CD8-positive, alpha-beta T cell (primary cell): ENCODE measurements at regions of chr15 and their contacts with region 1.

Region 1: DNA sequence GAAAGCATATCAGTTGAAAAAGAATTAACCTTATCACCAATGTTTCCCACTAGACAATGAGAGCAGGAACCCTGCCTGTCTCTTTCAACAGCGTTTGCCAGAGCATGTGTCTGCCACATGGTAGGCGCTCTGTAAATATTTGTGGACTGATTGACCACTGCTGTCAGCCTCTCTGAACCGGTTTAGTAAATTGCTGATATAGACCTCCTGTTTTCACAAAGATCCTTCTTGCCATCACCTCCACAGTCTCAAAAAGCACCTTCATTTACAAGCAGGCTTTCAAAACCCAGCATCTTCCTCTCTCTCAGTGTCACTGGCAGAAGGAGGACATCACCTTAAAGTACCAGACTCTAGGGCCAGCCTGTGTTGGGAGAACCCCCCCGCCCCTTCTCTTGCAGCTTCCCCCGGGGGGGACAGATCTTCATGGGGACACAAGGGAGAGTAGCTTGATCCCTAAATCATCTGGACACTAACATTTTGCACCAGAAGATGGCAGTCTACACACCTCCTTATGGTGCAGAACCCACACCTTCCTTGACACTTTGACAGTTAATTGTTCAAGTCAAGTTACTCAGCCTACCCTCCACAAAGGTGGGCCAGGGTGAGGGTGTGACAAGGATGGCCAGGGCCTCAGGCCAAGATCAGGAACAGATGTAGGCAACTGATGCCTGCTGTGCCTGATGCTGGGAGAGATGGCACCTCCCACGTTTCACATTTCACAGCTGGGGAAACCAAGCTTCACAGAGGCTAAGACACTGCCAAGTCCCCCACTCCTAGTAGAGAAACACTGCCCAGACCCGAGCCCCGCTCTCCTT is 37.8 kb upstream of the USP3 start:
- DNase-seq: peak in 7 of 9 experiments; percentile 41 to 88 (median 61)
- ATAC-seq: peak; percentile 90
- H3K4me3 ChIP-seq: no peak overlapping the region
- H3K4me3 Mint-ChIP-seq: no peak overlapping the region
- H3K27ac ChIP-seq: no peak overlapping the region
- H3K27ac Mint-ChIP-seq: peak overlapping the region; percentile 9
- H3K4me1 ChIP-seq: peaks cover 8% of the 10 kb centered on the region
- H3K4me1 Mint-ChIP-seq: peaks cover 21% of the 10 kb centered on the region
- H3K27me3 ChIP-seq: no peaks in the 10 kb centered on the region
- H3K27me3 Mint-ChIP-seq: no peaks in the 10 kb centered on the region
- CTCF ChIP-seq: peak; percentile 66

Region 2: GRCh38 chr15:63414474-63415120 is 52.0 kb before region 1 on chr15:
- CTCF ChIA-PET with region 1: no interaction called
- POLR2A ChIA-PET with region 1: no interaction called
- intact Hi-C with region 1: no loop called
- DNase-seq: peak in 4 of 9 experiments; percentile 11 to 77 (median 52)
- ATAC-seq: peak; percentile 91
- H3K4me3 ChIP-seq: no peak overlapping the region
- H3K4me3 Mint-ChIP-seq: no peak overlapping the region
- H3K27ac ChIP-seq: peak overlapping the region; percentile 12 to 37
- H3K27ac Mint-ChIP-seq: peak overlapping the region; percentile 93
- H3K4me1 ChIP-seq: peaks cover 3% of the 10 kb centered on the region
- H3K4me1 Mint-ChIP-seq: peaks cover 10% of the 10 kb centered on the region
- H3K27me3 ChIP-seq: no peaks in the 10 kb centered on the region
- H3K27me3 Mint-ChIP-seq: no peaks in the 10 kb centered on the region
- CTCF ChIP-seq: no peak

Region 3: DNA sequence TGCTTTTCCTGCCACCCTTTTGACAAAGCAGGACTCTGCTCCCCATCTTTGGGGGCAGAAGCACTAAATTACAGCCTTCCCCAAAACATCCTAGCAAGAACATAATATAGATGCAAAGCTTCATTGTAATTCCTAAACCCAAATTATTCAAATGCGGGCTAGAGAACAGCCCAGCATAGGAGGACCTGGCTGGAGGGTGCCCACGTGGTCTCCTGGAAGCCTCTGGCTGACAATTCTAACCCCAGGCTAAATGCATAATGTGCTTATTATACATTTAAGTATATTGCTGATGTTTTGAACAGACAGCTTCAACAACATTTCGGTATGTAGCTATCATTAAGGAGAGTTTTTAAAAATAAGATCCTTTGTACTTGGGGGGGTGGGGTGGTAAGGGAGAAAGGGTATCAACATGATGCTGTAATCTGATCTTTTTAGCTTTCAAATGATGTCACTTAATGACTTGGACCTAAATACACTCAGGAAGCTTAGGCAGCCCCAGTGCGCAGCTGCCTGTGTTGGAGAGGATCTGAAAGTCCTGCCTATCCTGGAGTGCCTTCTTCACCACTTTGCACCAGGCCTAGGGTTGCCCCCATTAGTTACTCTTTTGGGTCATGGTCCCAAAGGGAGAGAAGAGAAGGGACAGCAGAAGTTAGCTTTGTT is 19.4 kb before region 1 on chr15:
- CTCF ChIA-PET with region 1: interaction called, 6 read pairs
- POLR2A ChIA-PET with region 1: no interaction called
- intact Hi-C with region 1: loop called in 1 of 2 experiments (anchors 2 kb)
- DNase-seq: no peak
- ATAC-seq: no peak
- H3K4me3 ChIP-seq: no peak overlapping the region
- H3K4me3 Mint-ChIP-seq: no peak overlapping the region
- H3K27ac ChIP-seq: peak overlapping the region; percentile 42 to 58
- H3K27ac Mint-ChIP-seq: peak overlapping the region; percentile 90
- H3K4me1 ChIP-seq: peaks cover 35% of the 10 kb centered on the region
- H3K4me1 Mint-ChIP-seq: peaks cover 31% of the 10 kb centered on the region
- H3K27me3 ChIP-seq: no peaks in the 10 kb centered on the region
- H3K27me3 Mint-ChIP-seq: no peaks in the 10 kb centered on the region
- CTCF ChIP-seq: no peak

Region 4: DNA sequence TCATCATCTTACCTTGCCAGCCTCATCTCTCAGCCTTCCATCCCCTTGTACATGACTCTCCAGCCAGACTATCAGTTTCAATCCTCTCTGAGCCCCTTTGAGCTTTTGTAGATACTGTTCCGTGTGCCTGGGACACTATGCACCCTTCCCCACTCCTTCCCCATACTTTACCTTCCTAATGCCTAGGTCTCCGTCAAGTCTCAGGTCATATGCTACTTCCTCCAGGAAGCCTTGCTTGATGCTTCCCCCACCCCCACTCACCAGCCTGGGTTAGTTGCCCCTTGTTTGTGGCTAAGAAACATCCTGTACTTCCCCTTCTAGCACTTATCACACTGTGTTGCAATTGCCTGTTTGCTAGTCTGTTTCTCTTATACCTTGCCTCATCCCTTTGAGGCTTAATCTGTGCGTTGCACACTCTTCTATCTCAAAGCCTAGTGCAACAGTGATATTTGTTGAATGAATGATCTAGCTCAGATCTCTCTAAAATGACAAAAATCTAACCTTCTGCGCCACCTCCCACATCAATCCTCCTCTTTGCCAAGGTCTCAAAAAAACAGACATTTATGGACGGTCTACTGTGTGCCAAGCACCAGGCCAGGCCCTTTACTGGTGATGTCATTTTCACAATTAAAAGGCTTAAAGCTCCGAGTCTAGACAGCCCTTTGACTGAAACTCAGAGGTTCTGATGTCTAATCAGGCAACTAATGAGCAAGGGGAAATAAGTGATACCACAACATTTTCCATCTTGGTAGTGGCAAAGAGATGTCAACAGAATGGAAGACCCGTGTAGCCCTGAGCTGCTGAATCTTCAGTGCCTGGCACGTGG is 31.3 kb after region 1 on chr15:
- CTCF ChIA-PET with region 1: interaction called, 58 read pairs
- POLR2A ChIA-PET with region 1: interaction called, 7 read pairs
- intact Hi-C with region 1: loop called in 1 of 2 experiments (anchors 1 kb)
- DNase-seq: peak; percentile 48 to 95 (median 79)
- ATAC-seq: peak; percentile 69
- H3K4me3 ChIP-seq: peak overlapping the region; percentile 28 to 37
- H3K4me3 Mint-ChIP-seq: no peak overlapping the region
- H3K27ac ChIP-seq: peak overlapping the region; percentile 57 to 94
- H3K27ac Mint-ChIP-seq: no peak overlapping the region
- H3K4me1 ChIP-seq: peaks cover 91% of the 10 kb centered on the region
- H3K4me1 Mint-ChIP-seq: peaks cover 79% of the 10 kb centered on the region
- H3K27me3 ChIP-seq: no peaks in the 10 kb centered on the region
- H3K27me3 Mint-ChIP-seq: no peaks in the 10 kb centered on the region
- CTCF ChIP-seq: no peak

Region 5: DNA sequence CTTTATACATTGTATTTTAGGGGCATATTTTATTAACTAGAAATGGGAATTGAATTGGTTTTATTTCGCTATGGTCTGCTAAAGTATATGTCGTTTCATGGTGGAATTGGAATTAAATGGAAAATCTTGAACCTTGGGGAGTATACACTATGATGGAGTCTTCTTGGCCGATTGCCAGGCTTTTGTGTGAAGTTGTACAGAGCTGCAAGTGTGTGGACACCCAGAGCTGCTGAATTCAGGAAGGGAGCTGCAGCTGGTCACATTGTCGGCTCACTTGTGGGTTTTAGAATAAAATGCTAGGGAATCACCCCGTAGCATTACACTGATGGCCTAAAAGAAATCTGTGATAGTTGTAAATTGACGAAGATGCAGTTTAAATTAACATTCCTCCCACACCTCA is 72.9 kb after region 1 on chr15:
- CTCF ChIA-PET with region 1: interaction called, 12 read pairs
- POLR2A ChIA-PET with region 1: no interaction called
- intact Hi-C with region 1: loop called in 1 of 2 experiments (anchors 5 kb)
- DNase-seq: no peak
- ATAC-seq: no peak
- H3K4me3 ChIP-seq: no peak overlapping the region
- H3K4me3 Mint-ChIP-seq: no peak overlapping the region
- H3K27ac ChIP-seq: no peak overlapping the region
- H3K27ac Mint-ChIP-seq: no peak overlapping the region
- H3K4me1 ChIP-seq: peaks cover 27% of the 10 kb centered on the region
- H3K4me1 Mint-ChIP-seq: peaks cover 61% of the 10 kb centered on the region
- H3K27me3 ChIP-seq: no peaks in the 10 kb centered on the region
- H3K27me3 Mint-ChIP-seq: no peaks in the 10 kb centered on the region
- CTCF ChIP-seq: no peak

Region 6: GRCh38 chr15:63573533-63573932 is 106.9 kb after region 1 on chr15:
- CTCF ChIA-PET with region 1: interaction called, 13 read pairs
- POLR2A ChIA-PET with region 1: no interaction called
- intact Hi-C with region 1: no loop called
- DNase-seq: no peak
- ATAC-seq: no peak
- H3K4me3 ChIP-seq: no peak overlapping the region
- H3K4me3 Mint-ChIP-seq: no peak overlapping the region
- H3K27ac ChIP-seq: no peak overlapping the region
- H3K27ac Mint-ChIP-seq: peak overlapping the region; percentile 24
- H3K4me1 ChIP-seq: no peaks in the 10 kb centered on the region
- H3K4me1 Mint-ChIP-seq: peaks cover 9% of the 10 kb centered on the region
- H3K27me3 ChIP-seq: no peaks in the 10 kb centered on the region
- H3K27me3 Mint-ChIP-seq: no peaks in the 10 kb centered on the region
- CTCF ChIP-seq: no peak

Region 7: DNA sequence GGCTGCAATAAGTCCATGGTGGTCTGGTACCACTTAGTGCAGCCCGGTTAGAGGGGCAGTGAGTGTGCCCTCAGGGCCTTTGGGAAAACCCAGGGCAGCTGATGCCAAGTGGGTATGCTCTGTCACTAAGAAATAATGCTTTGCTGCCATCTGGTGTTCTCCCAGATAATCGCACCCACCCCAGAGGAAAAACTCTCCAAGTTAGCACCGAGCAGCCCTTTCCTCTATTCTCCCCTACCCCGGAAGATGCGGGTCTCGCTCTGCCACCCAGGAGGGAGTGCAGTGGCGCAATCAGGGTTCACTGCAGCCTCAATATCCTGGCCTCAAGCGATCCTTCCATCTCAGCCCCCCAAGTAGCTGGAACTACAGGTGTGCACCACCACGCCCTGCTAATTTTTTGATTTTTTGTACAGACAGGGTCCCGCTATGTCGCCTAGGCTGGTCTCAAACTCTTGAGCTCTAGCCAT is 601.0 kb after region 1 on chr15:
- CTCF ChIA-PET with region 1: interaction called, 10 read pairs
- POLR2A ChIA-PET with region 1: no interaction called
- intact Hi-C with region 1: no loop called
- DNase-seq: peak; percentile 49 to 83 (median 71)
- ATAC-seq: peak; percentile 91
- H3K4me3 ChIP-seq: no peak overlapping the region
- H3K4me3 Mint-ChIP-seq: no peak overlapping the region
- H3K27ac ChIP-seq: no peak overlapping the region
- H3K27ac Mint-ChIP-seq: no peak overlapping the region
- H3K4me1 ChIP-seq: no peaks in the 10 kb centered on the region
- H3K4me1 Mint-ChIP-seq: peaks cover 5% of the 10 kb centered on the region
- H3K27me3 ChIP-seq: no peaks in the 10 kb centered on the region
- H3K27me3 Mint-ChIP-seq: no peaks in the 10 kb centered on the region
- CTCF ChIP-seq: peak; percentile 81